SK-N-SH (cell line): ENCODE measurements at regions of chr9 and their contacts with region 1.

Region 1: GRCh38 chr9:36023260-36024048 is 13.3 kb upstream of the RECK start:
- DNase-seq: peak; percentile 68
- H3K4me3 ChIP-seq: no peak overlapping the region
- H3K27ac ChIP-seq: no peak overlapping the region
- H3K4me1 ChIP-seq: peaks cover 0 to 7% of the 10 kb centered on the region in 2 experiments; a peak in 2 of 4 replicates
- H3K27me3 ChIP-seq: no peaks in the 10 kb centered on the region
- CTCF ChIP-seq: peak; percentile 93
- EP300 ChIP-seq: no peak
- RAD21 ChIP-seq: peak; percentile 88

Region 2: GRCh38 chr9:36036780-36037548 is 13.5 kb after region 1 on chr9 and contains the start of gene RECK:
- CTCF ChIA-PET with region 1: interaction called, 38 read pairs
- POLR2A ChIA-PET with region 1: no interaction called
- DNase-seq: peak; percentile 96
- H3K4me3 ChIP-seq: peak within 1 kb of the TSS; percentile 72 to 81
- H3K27ac ChIP-seq: peak within 1 kb of the TSS; percentile 73 to 79
- H3K4me1 ChIP-seq: peaks cover 6 to 17% of the 10 kb centered on the region in 2 experiments
- H3K27me3 ChIP-seq: no peaks in the 10 kb centered on the region
- CTCF ChIP-seq: no peak
- EP300 ChIP-seq: 0 out of 4 replicates have a peak, but pooled peaks of 1 of the 2 experiments have one; percentile 11
- RAD21 ChIP-seq: no peak
- polyA plus RNA-seq, gene RECK: 22.8 and 27.3 TPM in 2 replicates